Activated T-helper 1 cell treated with anti-CD3 and anti-CD28 coated beads, Interleukin-12 subunit alpha, Interleukin-12 subunit beta, Interleukin-2, Interleukin-4 antibody, amounts not matched to agents 30 ng/mL and 10 ng/mL and 1 ng/mL, durations not matched to agents 14 hours and 24 hours and 36 hours (primary cell): ENCODE measurements at regions of chr9 and their contacts with region 1.

Region 1: DNA sequence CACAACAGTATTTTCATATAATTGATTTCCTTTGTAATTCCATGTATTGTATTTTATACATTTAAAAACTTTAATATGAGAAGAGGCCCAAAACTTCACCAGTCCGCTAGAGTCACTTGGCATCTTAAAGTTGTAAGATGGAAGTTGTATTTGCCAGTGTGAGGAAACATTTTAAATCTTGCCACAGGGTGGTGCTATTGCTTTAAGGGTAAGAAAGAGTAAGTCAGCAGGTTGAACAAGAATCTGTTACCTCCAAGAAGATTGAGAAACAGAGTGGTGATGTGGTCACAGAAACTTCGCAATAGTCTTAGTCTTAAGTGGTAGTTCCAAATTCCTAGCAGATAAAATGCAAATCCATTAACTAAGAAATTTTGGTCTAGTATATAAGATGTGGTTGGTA is 39.8 kb upstream of the RANBP6 start:
- DNase-seq: peak; percentile 36
- H3K4me3 Mint-ChIP-seq: no peak overlapping the region
- H3K27ac Mint-ChIP-seq: no peak overlapping the region
- H3K4me1 Mint-ChIP-seq: peaks cover under 1% of the 10 kb centered on the region
- H3K27me3 Mint-ChIP-seq: peaks cover 19% of the 10 kb centered on the region

Region 2: DNA sequence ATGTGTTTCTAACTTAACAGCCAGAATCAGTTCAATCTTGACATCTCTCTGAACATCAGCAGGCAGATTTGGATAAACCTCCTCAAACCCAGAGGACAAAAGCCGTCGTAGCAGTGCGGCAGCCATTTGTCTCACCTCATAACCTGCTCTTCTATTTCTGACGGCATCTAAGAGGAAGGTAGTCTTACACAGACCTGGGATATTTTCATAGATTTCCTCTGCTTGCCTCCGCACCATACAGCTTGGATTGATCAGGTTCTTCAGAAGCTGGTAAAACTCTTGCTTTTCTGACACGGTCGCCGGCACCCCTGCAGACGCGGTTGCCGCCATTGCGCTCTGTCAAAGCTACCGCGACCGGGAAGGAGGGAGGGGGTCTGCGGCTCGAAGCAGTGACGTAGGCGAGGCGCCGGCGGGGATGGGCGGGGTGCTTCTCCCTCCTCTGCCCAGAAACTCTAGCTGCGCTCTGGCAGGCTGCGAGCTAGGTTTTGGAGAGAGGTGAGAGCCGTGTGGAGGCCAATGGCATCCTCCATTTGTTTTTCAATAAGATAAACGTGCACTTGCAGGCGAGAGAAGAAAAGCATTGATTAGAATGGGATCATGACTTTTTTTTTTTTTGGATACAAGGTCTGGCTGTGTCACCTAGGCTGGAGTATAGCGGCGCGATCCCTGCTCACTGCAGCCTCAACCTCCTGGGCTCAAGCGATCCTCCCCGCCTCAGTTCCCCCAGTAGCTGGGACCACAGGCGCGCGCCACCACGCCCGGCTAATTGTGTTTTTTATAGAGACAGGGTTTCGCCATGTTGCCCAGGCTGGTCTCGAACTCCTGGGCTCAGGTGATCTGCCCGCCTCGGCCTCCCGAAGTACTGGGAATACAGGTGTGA is 39.7 kb before region 1 on chr9 and contains the start of gene RANBP6:
- intact Hi-C with region 1: loop called (anchors 5 kb)
- DNase-seq: peak; percentile 86
- H3K4me3 Mint-ChIP-seq: peak within 1 kb of the TSS; percentile 96
- H3K27ac Mint-ChIP-seq: peak within 1 kb of the TSS; percentile 97
- H3K4me1 Mint-ChIP-seq: peaks cover 49% of the 10 kb centered on the region
- H3K27me3 Mint-ChIP-seq: no peaks in the 10 kb centered on the region
- total RNA-seq, gene RANBP6: 19.2 and 22.7 TPM in 2 replicates

Region 3: DNA sequence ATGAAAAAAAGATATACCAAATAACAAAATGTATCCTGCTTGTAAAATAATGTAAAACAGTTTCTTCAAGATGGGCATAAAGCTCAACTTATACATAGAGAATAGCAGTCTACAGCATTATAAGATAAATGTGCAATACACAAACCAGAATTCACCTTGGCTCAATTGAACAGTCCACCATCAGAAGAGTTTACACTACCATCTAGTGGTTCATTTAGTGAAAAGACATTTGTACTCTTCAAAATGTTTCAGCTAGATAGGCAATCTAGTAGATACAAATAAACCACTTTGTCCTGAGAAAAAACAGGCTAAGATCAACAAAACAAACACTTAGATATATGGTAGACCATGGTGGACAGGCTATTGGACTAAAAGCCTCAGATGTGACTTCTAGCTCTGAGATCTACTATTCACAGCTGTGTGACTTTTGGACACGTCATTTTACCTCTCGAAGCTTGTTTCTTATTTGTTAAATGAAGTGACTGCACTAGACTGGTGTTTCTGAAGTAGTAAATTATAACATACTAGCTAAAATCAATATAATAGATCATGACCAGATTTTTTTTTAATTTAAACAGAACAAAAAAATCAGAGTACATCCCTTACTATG is 250.8 kb after region 1 on chr9:
- intact Hi-C with region 1: loop called (anchors 1 kb)
- DNase-seq: no peak
- H3K4me3 Mint-ChIP-seq: no peak overlapping the region
- H3K27ac Mint-ChIP-seq: no peak overlapping the region
- H3K4me1 Mint-ChIP-seq: no peaks in the 10 kb centered on the region
- H3K27me3 Mint-ChIP-seq: peaks cover 21% of the 10 kb centered on the region

Region 4: DNA sequence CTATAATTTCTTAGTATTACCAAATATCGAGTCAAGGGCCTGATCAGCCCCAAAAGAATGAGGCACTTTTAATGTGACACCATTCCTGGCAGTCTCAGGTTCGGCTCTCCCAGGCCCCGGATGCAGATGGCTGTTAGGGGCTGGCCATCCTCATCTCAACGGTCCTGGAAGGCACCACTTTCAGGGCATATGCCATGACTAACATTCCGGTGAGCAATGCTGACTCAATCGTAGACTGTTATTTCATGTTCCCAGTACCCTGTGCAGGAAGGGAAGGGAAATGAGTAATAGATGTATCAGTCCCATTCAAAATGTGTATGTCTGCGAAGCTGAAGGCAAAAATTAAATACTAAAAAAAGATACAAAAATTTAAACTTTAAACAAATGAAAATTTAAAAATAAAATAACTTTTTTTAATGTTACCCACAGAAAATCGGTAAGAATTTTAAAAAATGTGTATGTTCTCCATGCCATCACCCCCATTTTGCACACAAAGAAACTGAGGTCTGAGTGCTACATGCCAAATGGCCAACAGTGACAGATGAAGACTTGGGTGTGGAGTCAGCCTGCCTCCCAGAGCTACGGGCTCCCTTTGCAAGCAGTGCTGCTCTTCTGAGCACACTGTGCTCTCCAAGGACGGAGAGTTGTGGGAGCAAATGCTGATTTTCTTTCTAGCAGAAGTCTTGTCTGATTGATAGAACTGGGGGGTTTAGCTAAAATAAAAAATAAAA is 511.4 kb after region 1 on chr9:
- intact Hi-C with region 1: loop called (anchors 1 kb)
- DNase-seq: peak; percentile 44
- H3K4me3 Mint-ChIP-seq: peak overlapping the region; percentile 57
- H3K27ac Mint-ChIP-seq: peak overlapping the region; percentile 80
- H3K4me1 Mint-ChIP-seq: peaks cover 26% of the 10 kb centered on the region
- H3K27me3 Mint-ChIP-seq: peaks cover 4% of the 10 kb centered on the region